Ovary (tissue), 10 donors: ENCODE measurements at regions of chr20 and their contacts with region 1.

Region 1: GRCh38 chr20:44885392-44886265 is at the start of gene YWHAB:
- DNase-seq: peak; percentile 97 to 99 (median 98)
- H3K4me3 ChIP-seq: peak within 1 kb of the TSS; percentile 100
- H3K27ac ChIP-seq: peak within 1 kb of the TSS; percentile 46 to 83
- H3K4me1 ChIP-seq: no peaks in the 10 kb centered on the region
- H3K27me3 ChIP-seq: no peaks in the 10 kb centered on the region
- CTCF ChIP-seq: no peak
- EP300 ChIP-seq: no peak
- POLR2A ChIP-seq: peak; percentile 73
- total RNA-seq, gene YWHAB: 55.1 to 153 (median 117) TPM

Region 2: GRCh38 chr20:44714696-44715482 is 170.7 kb before region 1 on chr20 and contains the start of gene CCN5:
- intact Hi-C with region 1: no loop called
- DNase-seq: peak; percentile 87 to 97 (median 95)
- H3K4me3 ChIP-seq: peak within 1 kb of the TSS; percentile 15
- H3K27ac ChIP-seq: peak within 1 kb of the TSS; percentile 17 to 78
- H3K4me1 ChIP-seq: peaks cover 32% of the 10 kb centered on the region
- H3K27me3 ChIP-seq: no peaks in the 10 kb centered on the region
- CTCF ChIP-seq: no peak
- EP300 ChIP-seq: no peak
- POLR2A ChIP-seq: no peak
- total RNA-seq, gene CCN5: 47.4 to 296 (median 148) TPM

Region 3: GRCh38 chr20:44747166-44748004 is 138.2 kb before region 1 on chr20:
- intact Hi-C with region 1: no loop called
- DNase-seq: peak; percentile 73 to 86 (median 81)
- H3K4me3 ChIP-seq: no peak overlapping the region
- H3K27ac ChIP-seq: no peak overlapping the region
- H3K4me1 ChIP-seq: no peaks in the 10 kb centered on the region
- H3K27me3 ChIP-seq: no peaks in the 10 kb centered on the region
- CTCF ChIP-seq: peak; percentile 60 to 70 (median 68)
- EP300 ChIP-seq: no peak
- POLR2A ChIP-seq: no peak

Region 4: GRCh38 chr20:44959638-44960102 is 74.0 kb after region 1 on chr20:
- intact Hi-C with region 1: loop called in 1 of 4 experiments (anchors 10 kb)
- DNase-seq: peak in 2 of 5 donors; percentile 18 to 33
- H3K4me3 ChIP-seq: peak overlapping the region; percentile 76
- H3K27ac ChIP-seq: peak overlapping the region in 1 of 2 donors; percentile 50
- H3K4me1 ChIP-seq: peaks cover 7% of the 10 kb centered on the region
- H3K27me3 ChIP-seq: no peaks in the 10 kb centered on the region
- CTCF ChIP-seq: no peak
- EP300 ChIP-seq: no peak
- POLR2A ChIP-seq: no peak

Region 5: GRCh38 chr20:45347936-45348778 is 462.5 kb after region 1 on chr20 and contains the start of gene SDC4:
- intact Hi-C with region 1: no loop called
- DNase-seq: peak; percentile 50 to 74 (median 63)
- H3K4me3 ChIP-seq: peak within 1 kb of the TSS; percentile 67
- H3K27ac ChIP-seq: peak within 1 kb of the TSS; percentile 21 to 59
- H3K4me1 ChIP-seq: peaks cover 8% of the 10 kb centered on the region
- H3K27me3 ChIP-seq: no peaks in the 10 kb centered on the region
- CTCF ChIP-seq: no peak
- EP300 ChIP-seq: no peak
- POLR2A ChIP-seq: peak; percentile 59
- total RNA-seq, gene SDC4: 12.9 to 269 (median 45.9) TPM